ENCODE measurements at regions of chr5 and their contacts with region 1.

Region 1: DNA sequence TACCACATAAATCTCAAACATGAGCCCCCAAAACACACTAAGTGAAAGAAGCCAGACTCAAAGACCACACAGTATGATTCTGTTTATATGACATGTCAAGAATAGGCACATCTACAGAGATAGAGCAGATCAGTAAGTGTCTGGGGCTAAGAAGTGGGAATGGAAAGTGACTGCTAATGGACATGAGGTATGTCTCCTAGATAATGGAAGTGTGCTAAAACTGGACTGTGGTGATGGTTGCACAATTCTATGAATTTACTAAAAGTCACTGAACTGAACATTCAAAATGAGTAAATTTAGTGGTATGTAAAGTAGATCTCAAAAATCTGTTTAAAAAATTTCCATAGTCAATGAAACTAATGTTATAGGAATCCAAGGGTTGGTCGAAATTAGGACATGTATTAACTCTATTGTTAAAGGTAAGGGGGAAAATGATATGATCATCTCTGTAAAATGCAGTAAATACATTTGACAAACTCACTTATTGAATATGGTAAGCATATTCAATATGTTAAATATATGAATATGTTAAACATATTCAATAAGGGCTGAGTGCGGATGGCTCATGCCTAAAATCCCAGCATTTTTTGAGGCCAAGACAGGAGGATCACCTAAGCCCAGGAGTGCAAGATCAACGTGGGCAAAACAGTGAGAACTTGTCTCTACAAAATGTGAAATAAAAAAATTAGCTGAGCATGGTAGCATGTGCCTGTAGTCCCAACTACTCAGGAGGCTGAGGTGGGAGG is 51.7 kb downstream of the NUP155 start:
- DNase-seq: no peak
- H3K4me3 ChIP-seq: no peak overlapping the region
- H3K4me3 Mint-ChIP-seq: no peak overlapping the region
- H3K27ac ChIP-seq: no peak overlapping the region
- H3K27ac Mint-ChIP-seq: peak overlapping the region in 2 of 7 donors; percentile 16 to 62
- H3K4me1 ChIP-seq: no peaks in the 10 kb centered on the region
- H3K4me1 Mint-ChIP-seq: peaks cover 2% of the 10 kb centered on the region
- H3K27me3 ChIP-seq: no peaks in the 10 kb centered on the region
- H3K27me3 Mint-ChIP-seq: peaks cover 0 to 1% (median 0%) of the 10 kb centered on the region in 3 donors
- CTCF ChIP-seq: no peak

Region 2: DNA sequence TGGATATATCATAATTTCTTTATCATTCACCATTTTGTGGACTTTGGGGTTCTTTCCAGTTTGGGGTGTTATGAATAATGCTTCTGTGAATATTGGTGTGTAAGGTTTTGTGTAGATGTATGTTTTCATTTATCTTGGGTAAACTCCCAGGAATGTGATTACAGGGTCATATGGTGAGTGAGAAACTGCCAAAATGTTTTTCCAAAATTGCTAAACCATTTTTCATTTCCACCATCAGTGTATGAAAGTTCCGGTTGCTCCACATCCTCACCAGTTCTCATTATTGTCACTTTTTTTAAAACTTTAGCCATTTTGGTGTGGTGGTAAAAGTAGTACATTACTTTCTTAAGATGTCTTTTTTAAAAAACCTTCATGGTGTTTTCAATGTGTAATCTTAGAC is 289.8 kb before region 1 on chr5:
- intact Hi-C with region 1: loop called in 1 of 2 experiments (anchors 10 kb)
- DNase-seq: no peak
- H3K4me3 ChIP-seq: no peak overlapping the region
- H3K4me3 Mint-ChIP-seq: no peak overlapping the region
- H3K27ac ChIP-seq: no peak overlapping the region
- H3K27ac Mint-ChIP-seq: no peak overlapping the region
- H3K4me1 ChIP-seq: no peaks in the 10 kb centered on the region
- H3K4me1 Mint-ChIP-seq: no peaks in the 10 kb centered on the region
- H3K27me3 ChIP-seq: no peaks in the 10 kb centered on the region
- H3K27me3 Mint-ChIP-seq: no peaks in the 10 kb centered on the region
- CTCF ChIP-seq: no peak

Region 3: GRCh38 chr5:37355166-37355565 is 36.0 kb after region 1 on chr5:
- intact Hi-C with region 1: no loop called
- DNase-seq: no peak
- H3K4me3 ChIP-seq: no peak overlapping the region
- H3K4me3 Mint-ChIP-seq: no peak overlapping the region
- H3K27ac ChIP-seq: no peak overlapping the region
- H3K27ac Mint-ChIP-seq: no peak overlapping the region
- H3K4me1 ChIP-seq: no peaks in the 10 kb centered on the region
- H3K4me1 Mint-ChIP-seq: no peaks in the 10 kb centered on the region
- H3K27me3 ChIP-seq: no peaks in the 10 kb centered on the region
- H3K27me3 Mint-ChIP-seq: peaks cover 0 to 2% (median 0%) of the 10 kb centered on the region in 3 donors
- CTCF ChIP-seq: no peak

Measured in CD14-positive monocyte (primary cell).